ENCODE measurements at regions of chr1 and their contacts with region 1.

Region 1: GRCh38 chr1:161225534-161226319 is at the start of gene TOMM40L:
- DNase-seq: peak; percentile 90
- ATAC-seq: peak; percentile 92
- H3K4me3 ChIP-seq: peak within 1 kb of the TSS; percentile 82 to 86
- H3K27ac ChIP-seq: peak within 1 kb of the TSS; percentile 90
- H3K4me1 ChIP-seq: peaks cover 19% of the 10 kb centered on the region
- H3K27me3 ChIP-seq: no peaks in the 10 kb centered on the region
- CTCF ChIP-seq: peak; percentile 58; the same call in 1 of the 2 replicates
- total RNA-seq, gene TOMM40L: 9.2 TPM

Region 2: DNA sequence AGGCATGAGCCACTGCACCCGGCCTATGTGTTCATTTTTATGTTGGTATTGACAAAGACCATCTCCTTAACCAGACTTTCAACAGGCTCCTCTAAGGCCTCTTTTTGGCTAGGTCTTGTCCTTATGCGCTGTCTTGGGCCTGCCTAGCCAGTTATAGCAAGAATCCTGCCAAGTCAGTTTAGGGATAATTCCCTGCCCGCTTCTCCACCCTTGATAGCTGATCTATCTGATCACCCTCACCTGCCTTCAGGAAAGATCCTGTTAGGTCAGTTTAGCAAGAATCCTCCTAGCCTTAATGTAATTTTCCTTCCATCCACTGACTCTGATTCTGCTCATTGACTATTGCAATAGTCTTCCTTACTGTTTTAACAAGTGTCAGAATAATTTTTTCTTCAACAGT is 46.0 kb before region 1 on chr1:
- CTCF ChIA-PET with region 1: interaction called, 11 read pairs
- POLR2A ChIA-PET with region 1: no interaction called
- in situ Hi-C with region 1: no loop called
- intact Hi-C with region 1: no loop called
- DNase-seq: no peak
- ATAC-seq: no peak
- H3K4me3 ChIP-seq: no peak overlapping the region
- H3K27ac ChIP-seq: no peak overlapping the region
- H3K4me1 ChIP-seq: peaks cover 10% of the 10 kb centered on the region
- H3K27me3 ChIP-seq: no peaks in the 10 kb centered on the region
- CTCF ChIP-seq: no peak

Region 3: DNA sequence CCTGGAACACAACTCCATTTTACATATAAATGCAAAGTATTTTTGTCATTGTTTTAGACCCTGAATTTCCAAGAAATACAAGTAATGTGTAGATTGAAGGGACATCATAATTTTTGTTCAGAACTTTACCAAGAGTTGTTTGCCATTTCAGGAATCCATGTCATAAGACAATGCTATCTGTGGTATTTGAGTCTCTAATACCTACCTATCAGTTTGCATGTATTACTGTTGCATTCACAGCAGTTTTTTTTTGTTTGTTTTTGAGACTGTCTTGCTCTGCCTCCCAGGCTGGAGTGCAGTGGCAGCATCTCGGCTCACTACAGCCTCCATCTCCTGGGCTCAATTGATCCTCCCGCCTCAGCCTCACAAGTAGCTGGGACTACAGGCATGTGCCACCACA is 66.9 kb after region 1 on chr1:
- CTCF ChIA-PET with region 1: interaction called, 9 read pairs
- POLR2A ChIA-PET with region 1: interaction called, 3 read pairs
- in situ Hi-C with region 1: no loop called
- intact Hi-C with region 1: loop called (anchors 5 kb)
- DNase-seq: no peak
- ATAC-seq: no peak
- H3K4me3 ChIP-seq: no peak overlapping the region
- H3K27ac ChIP-seq: no peak overlapping the region
- H3K4me1 ChIP-seq: no peaks in the 10 kb centered on the region
- H3K27me3 ChIP-seq: peaks cover 2% of the 10 kb centered on the region; the same call in 1 of the 2 replicates
- CTCF ChIP-seq: no peak

Region 4: DNA sequence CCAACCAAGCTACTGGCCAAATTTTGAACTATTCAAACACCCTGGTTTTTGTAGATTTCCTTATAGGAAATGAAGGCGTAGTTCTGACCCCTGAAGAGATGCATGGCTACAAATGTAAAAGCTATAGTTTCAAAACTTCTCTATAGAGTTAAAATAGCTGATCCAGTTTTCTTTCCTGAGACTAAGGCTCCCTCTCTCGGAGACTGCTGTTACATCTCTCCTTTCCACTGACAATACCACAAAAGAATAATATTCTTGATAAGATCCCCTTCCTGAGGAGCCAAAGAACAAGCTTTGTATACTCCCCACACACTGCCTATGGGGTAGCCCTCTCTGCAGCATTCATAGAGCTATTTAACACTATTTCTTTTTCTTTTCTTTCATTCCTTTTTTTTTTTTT is 148.6 kb after region 1 on chr1:
- CTCF ChIA-PET with region 1: interaction called, 30 read pairs
- POLR2A ChIA-PET with region 1: interaction called, 3 read pairs
- in situ Hi-C with region 1: loop called (anchors 25 kb)
- intact Hi-C with region 1: loop called (anchors 5 kb)
- DNase-seq: no peak
- ATAC-seq: peak; percentile 82
- H3K4me3 ChIP-seq: no peak overlapping the region
- H3K27ac ChIP-seq: no peak overlapping the region
- H3K4me1 ChIP-seq: no peaks in the 10 kb centered on the region
- H3K27me3 ChIP-seq: no peaks in the 10 kb centered on the region
- CTCF ChIP-seq: peak; percentile 70; the same call in 1 of the 2 replicates

Measured in Panc1 (cell line).